ENCODE measurements at regions of chr13 and their contacts with region 1.

Region 1: DNA sequence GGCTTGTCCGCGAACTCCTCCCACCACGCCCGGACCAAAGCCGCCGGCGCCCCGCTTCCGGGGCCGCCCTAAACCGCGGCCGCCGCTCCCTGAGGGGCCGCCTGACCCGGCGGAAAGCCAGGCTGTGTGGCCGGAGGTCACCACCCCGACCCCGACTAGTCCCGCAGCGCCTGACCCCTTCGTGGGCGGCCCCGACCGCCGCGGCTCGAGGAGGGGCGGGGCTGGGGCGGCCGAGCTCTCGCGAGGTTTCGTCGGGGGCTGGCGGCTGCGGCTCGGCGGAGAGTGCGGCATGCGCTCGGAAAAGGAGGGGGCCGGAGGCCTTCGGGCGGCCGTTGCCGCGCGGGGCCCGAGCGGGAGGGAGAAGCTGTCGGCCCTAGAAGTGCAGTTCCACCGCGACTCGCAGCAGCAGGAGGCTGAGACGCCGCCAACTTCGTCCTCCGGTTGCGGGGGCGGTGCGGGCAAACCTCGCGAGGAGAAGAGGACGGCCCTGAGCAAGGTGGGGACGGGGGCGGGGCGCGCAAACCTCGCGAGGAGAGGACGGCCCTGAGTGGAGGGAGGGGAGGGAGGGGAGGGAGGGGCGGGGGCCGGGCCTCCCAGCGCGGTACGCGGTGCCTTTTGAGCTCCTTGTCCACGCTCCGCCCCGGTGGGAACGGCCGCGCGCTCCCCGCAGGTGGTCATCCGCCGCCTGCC is at the start of gene UPF3A:
- DNase-seq: peak; percentile 86 to 95
- ATAC-seq: peak; percentile 79 to 93 (median 80)
- H3K4me3 ChIP-seq: peak within 1 kb of the TSS; percentile 78
- H3K4me3 Mint-ChIP-seq: peak within 1 kb of the TSS; percentile 92
- H3K27ac ChIP-seq: peak within 1 kb of the TSS; percentile 91
- H3K27ac Mint-ChIP-seq: peak within 1 kb of the TSS; percentile 89 to 95
- H3K4me1 ChIP-seq: peaks cover 22% of the 10 kb centered on the region
- H3K4me1 Mint-ChIP-seq: peaks cover 42 to 43% of the 10 kb centered on the region in 2 donors
- H3K27me3 ChIP-seq: no peaks in the 10 kb centered on the region
- H3K27me3 Mint-ChIP-seq: no peaks in the 10 kb centered on the region
- CTCF ChIP-seq: no peak
- total RNA-seq, gene UPF3A: 37.8 to 66.5 (median 44.7) TPM

Region 2: GRCh38 chr13:113756441-113757097 is 524.9 kb before region 1 on chr13:
- intact Hi-C with region 1: no loop called
- DNase-seq: no peak
- ATAC-seq: no peak
- H3K4me3 ChIP-seq: no peak overlapping the region
- H3K4me3 Mint-ChIP-seq: no peak overlapping the region
- H3K27ac ChIP-seq: no peak overlapping the region
- H3K27ac Mint-ChIP-seq: no peak overlapping the region
- H3K4me1 ChIP-seq: peaks cover 19% of the 10 kb centered on the region
- H3K4me1 Mint-ChIP-seq: peaks cover 13 to 20% of the 10 kb centered on the region in 2 donors
- H3K27me3 ChIP-seq: peaks cover 24% of the 10 kb centered on the region
- H3K27me3 Mint-ChIP-seq: peaks cover 37 to 45% of the 10 kb centered on the region in 2 donors
- CTCF ChIP-seq: no peak

Region 3: GRCh38 chr13:114119196-114119595 is 162.3 kb before region 1 on chr13:
- intact Hi-C with region 1: no loop called
- DNase-seq: no peak
- ATAC-seq: no peak
- H3K4me3 ChIP-seq: no peak overlapping the region
- H3K4me3 Mint-ChIP-seq: peak overlapping the region; percentile 84
- H3K27ac ChIP-seq: peak overlapping the region; percentile 46
- H3K27ac Mint-ChIP-seq: peak overlapping the region; percentile 65 to 93
- H3K4me1 ChIP-seq: peaks cover 87% of the 10 kb centered on the region
- H3K4me1 Mint-ChIP-seq: peaks cover 55 to 83% of the 10 kb centered on the region in 2 donors
- H3K27me3 ChIP-seq: no peaks in the 10 kb centered on the region
- H3K27me3 Mint-ChIP-seq: no peaks in the 10 kb centered on the region
- CTCF ChIP-seq: no peak

Region 4: DNA sequence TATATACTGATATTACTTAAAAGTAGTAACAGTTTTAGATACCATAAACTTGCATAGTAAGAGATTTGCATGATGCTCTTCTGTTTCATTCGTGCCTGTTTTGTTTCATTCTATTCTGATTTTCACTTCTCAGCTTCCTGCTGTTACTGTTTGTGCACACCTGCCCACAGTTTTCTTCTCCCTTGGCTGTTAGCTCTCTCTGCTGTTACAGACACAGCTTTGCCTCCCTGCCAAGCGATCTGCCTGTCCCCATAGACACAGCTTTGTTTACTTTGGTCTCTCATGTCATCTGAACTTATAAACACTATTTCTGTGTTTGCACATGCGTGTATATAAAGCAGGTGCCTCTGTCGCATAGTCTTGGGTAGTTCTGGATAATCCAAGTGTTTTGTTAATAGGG is 21.5 kb before region 1 on chr13:
- intact Hi-C with region 1: loop called (anchors 1 kb)
- DNase-seq: no peak
- ATAC-seq: no peak
- H3K4me3 ChIP-seq: no peak overlapping the region
- H3K4me3 Mint-ChIP-seq: no peak overlapping the region
- H3K27ac ChIP-seq: no peak overlapping the region
- H3K27ac Mint-ChIP-seq: peak overlapping the region in 1 of 2 donors; percentile 37
- H3K4me1 ChIP-seq: peaks cover 43% of the 10 kb centered on the region
- H3K4me1 Mint-ChIP-seq: peaks cover 54 to 63% of the 10 kb centered on the region in 2 donors
- H3K27me3 ChIP-seq: no peaks in the 10 kb centered on the region
- H3K27me3 Mint-ChIP-seq: no peaks in the 10 kb centered on the region
- CTCF ChIP-seq: no peak

Region 5: GRCh38 chr13:114268344-114269280 is 12.9 kb before region 1 on chr13:
- intact Hi-C with region 1: loop called (anchors 1 kb)
- DNase-seq: peak in 1 of 2 donors; percentile 59
- ATAC-seq: peak; percentile 65 to 76 (median 74)
- H3K4me3 ChIP-seq: peak overlapping the region; percentile 29
- H3K4me3 Mint-ChIP-seq: peak overlapping the region; percentile 88
- H3K27ac ChIP-seq: peak overlapping the region; percentile 65
- H3K27ac Mint-ChIP-seq: peak overlapping the region; percentile 86 to 88
- H3K4me1 ChIP-seq: peaks cover 60% of the 10 kb centered on the region
- H3K4me1 Mint-ChIP-seq: peaks cover 47 to 68% of the 10 kb centered on the region in 2 donors
- H3K27me3 ChIP-seq: no peaks in the 10 kb centered on the region
- H3K27me3 Mint-ChIP-seq: no peaks in the 10 kb centered on the region
- CTCF ChIP-seq: no peak

Region 6: GRCh38 chr13:114314074-114314912 is 32.8 kb after region 1 on chr13 and contains the start of gene CHAMP1:
- intact Hi-C with region 1: loop called (anchors 2 kb)
- DNase-seq: peak; percentile 71 to 95
- ATAC-seq: peak; percentile 89 to 91 (median 91)
- H3K4me3 ChIP-seq: peak within 1 kb of the TSS; percentile 66
- H3K4me3 Mint-ChIP-seq: peak within 1 kb of the TSS; percentile 96
- H3K27ac ChIP-seq: peak within 1 kb of the TSS; percentile 70
- H3K27ac Mint-ChIP-seq: peak within 1 kb of the TSS; percentile 74 to 82
- H3K4me1 ChIP-seq: peaks cover 11% of the 10 kb centered on the region
- H3K4me1 Mint-ChIP-seq: peaks cover 29 to 41% of the 10 kb centered on the region in 2 donors
- H3K27me3 ChIP-seq: no peaks in the 10 kb centered on the region
- H3K27me3 Mint-ChIP-seq: no peaks in the 10 kb centered on the region
- CTCF ChIP-seq: no peak
- total RNA-seq, gene CHAMP1: 6.1 to 11.3 (median 7.9) TPM